Spleen (tissue), 13 donors: ENCODE measurements at regions of chr5 and their contacts with region 1.

Region 1: GRCh38 chr5:138077065-138077696 is 6.7 kb upstream of the WNT8A start:
- DNase-seq: no peak
- H3K4me3 ChIP-seq: no peak overlapping the region
- H3K27ac ChIP-seq: no peak overlapping the region
- H3K4me1 ChIP-seq: peaks cover 0 to 15% (median 8%) of the 10 kb centered on the region in 6 donors
- H3K27me3 ChIP-seq: peaks cover 0 to under 1% (median 0%) of the 10 kb centered on the region in 7 donors
- CTCF ChIP-seq: peak; percentile 63 to 85 (median 78)
- POLR2A ChIP-seq: no peak

Region 2: DNA sequence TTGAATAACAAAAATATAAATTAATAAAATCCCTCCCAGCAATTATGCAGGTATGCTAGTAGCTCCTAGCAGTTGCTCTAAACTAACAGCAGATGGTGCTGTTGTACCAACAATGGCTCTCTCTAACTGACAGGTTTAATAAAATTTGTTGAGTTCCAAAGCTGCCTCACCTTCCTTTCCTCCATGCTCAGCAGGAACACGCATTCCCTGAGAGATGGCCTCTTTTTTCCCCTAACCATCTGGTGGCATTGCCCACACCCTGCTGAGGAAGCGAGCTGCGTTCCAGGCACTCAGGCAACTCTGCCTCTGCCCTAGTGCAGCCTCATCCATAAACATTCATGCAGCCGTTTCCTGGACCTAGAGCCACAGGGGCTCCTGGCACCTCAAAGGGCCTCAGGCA is 447.5 kb before region 1 on chr5:
- intact Hi-C with region 1: loop called (anchors 10 kb)
- DNase-seq: no peak
- H3K4me3 ChIP-seq: no peak overlapping the region
- H3K27ac ChIP-seq: no peak overlapping the region
- H3K4me1 ChIP-seq: peaks cover 0 to 15% (median 7%) of the 10 kb centered on the region in 6 donors
- H3K27me3 ChIP-seq: no peaks in the 10 kb centered on the region
- CTCF ChIP-seq: peak; percentile 70 to 94 (median 88)
- POLR2A ChIP-seq: no peak

Region 3: GRCh38 chr5:137743031-137743640 is 334.0 kb before region 1 on chr5:
- intact Hi-C with region 1: no loop called
- DNase-seq: no peak
- H3K4me3 ChIP-seq: no peak overlapping the region
- H3K27ac ChIP-seq: no peak overlapping the region
- H3K4me1 ChIP-seq: peaks cover 0 to 15% (median 0%) of the 10 kb centered on the region in 6 donors
- H3K27me3 ChIP-seq: no peaks in the 10 kb centered on the region
- CTCF ChIP-seq: peak; percentile 29 to 72 (median 57)
- POLR2A ChIP-seq: no peak

Region 4: GRCh38 chr5:137847687-137848086 is 229.5 kb before region 1 on chr5:
- intact Hi-C with region 1: no loop called
- DNase-seq: no peak
- H3K4me3 ChIP-seq: no peak overlapping the region
- H3K27ac ChIP-seq: peak overlapping the region in 3 of 8 donors; percentile 2 to 45 (median 26)
- H3K4me1 ChIP-seq: peaks cover 0 to under 1% (median 0%) of the 10 kb centered on the region in 6 donors
- H3K27me3 ChIP-seq: no peaks in the 10 kb centered on the region
- CTCF ChIP-seq: no peak
- POLR2A ChIP-seq: no peak

Region 5: GRCh38 chr5:138132543-138132942 is 55.4 kb after region 1 on chr5:
- intact Hi-C with region 1: loop called (anchors 2 kb)
- DNase-seq: no peak
- H3K4me3 ChIP-seq: peak overlapping the region in 2 of 8 donors; percentile 42 to 62
- H3K27ac ChIP-seq: no peak overlapping the region
- H3K4me1 ChIP-seq: peaks cover 0 to 14% (median 4%) of the 10 kb centered on the region in 6 donors
- H3K27me3 ChIP-seq: peaks cover 0 to 20% (median 0%) of the 10 kb centered on the region in 7 donors
- CTCF ChIP-seq: no peak
- POLR2A ChIP-seq: no peak